ENCODE measurements at regions of chr6 and their contacts with region 1.

Region 1: DNA sequence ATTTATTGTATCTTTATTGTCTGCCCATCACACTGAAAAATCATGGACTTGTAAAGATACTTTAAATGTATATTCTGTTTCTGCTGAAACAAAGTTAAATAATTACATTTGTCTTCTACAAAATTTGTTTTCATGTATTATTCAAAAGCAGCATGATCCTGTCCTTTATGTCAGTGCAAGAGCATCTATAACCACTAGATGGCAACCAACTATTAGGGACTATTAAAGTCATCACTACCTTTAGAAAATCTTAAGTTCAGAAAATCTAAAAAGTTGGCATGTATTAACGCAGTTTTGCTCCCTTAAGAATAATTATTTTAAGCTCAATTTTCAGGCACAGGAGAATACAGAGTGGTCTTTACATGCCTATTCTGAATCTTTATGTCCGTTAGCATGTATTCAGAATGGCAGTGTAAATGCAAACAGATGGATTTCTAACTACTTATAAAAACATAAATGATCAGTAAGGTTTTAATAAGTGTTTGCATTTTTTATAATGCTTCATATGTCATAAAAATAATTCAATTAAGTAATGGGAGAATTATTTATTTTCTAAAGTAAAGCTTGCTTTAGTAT is 17.8 kb downstream of the TMEM30A start:
- DNase-seq: peak; percentile 42
- ATAC-seq: peak; percentile 77
- H3K4me3 ChIP-seq: no peak overlapping the region
- H3K27ac ChIP-seq: no peak overlapping the region
- H3K4me1 ChIP-seq: no peaks in the 10 kb centered on the region
- H3K27me3 ChIP-seq: no peaks in the 10 kb centered on the region
- CTCF ChIP-seq: peak; percentile 63
- EP300 ChIP-seq: no peak
- POLR2A ChIP-seq: no peak
- RAD21 ChIP-seq: peak; percentile 26; the same call in 1 of the 2 replicates

Region 2: DNA sequence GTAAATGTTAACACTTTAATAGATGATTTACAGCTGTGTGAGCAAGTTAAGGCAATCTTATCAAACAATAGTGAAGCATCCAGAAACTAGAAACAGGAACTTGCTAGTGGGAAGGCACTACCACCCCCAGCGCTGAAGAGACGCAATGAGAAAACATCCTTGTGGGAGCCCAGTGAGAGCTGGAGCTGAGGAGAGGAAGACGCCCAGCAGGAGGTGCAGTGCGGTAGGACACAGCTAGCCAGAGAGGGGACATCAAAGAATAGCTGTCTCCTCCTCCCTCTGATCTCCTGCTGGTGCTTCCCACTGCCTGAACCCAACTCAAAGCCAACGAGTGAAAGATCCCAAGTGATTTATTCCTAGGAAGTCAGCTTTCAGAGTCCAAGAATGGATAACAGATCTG is 201.3 kb before region 1 on chr6:
- CTCF ChIA-PET with region 1: no interaction called
- POLR2A ChIA-PET with region 1: no interaction called
- in situ Hi-C with region 1: no loop called
- intact Hi-C with region 1: no loop called
- DNase-seq: no peak
- ATAC-seq: peak; percentile 80
- H3K4me3 ChIP-seq: no peak overlapping the region
- H3K27ac ChIP-seq: no peak overlapping the region
- H3K4me1 ChIP-seq: no peaks in the 10 kb centered on the region
- H3K27me3 ChIP-seq: no peaks in the 10 kb centered on the region
- CTCF ChIP-seq: 0 out of 2 replicates have a peak, but pooled peaks have one; percentile 29
- EP300 ChIP-seq: no peak
- POLR2A ChIP-seq: no peak
- RAD21 ChIP-seq: no peak

Region 3: GRCh38 chr6:75296811-75297779 is 30.3 kb after region 1 on chr6:
- CTCF ChIA-PET with region 1: interaction called, 9 read pairs
- POLR2A ChIA-PET with region 1: no interaction called
- in situ Hi-C with region 1: no loop called
- intact Hi-C with region 1: loop called (anchors 2 kb)
- DNase-seq: peak; percentile 57
- ATAC-seq: peak; percentile 56
- H3K4me3 ChIP-seq: no peak overlapping the region
- H3K27ac ChIP-seq: no peak overlapping the region
- H3K4me1 ChIP-seq: no peaks in the 10 kb centered on the region
- H3K27me3 ChIP-seq: no peaks in the 10 kb centered on the region
- CTCF ChIP-seq: peak; percentile 72
- EP300 ChIP-seq: no peak
- POLR2A ChIP-seq: no peak
- RAD21 ChIP-seq: peak; percentile 28; the same call in 1 of the 2 replicates

Region 4: GRCh38 chr6:75317503-75318206 is 50.9 kb after region 1 on chr6:
- CTCF ChIA-PET with region 1: no interaction called
- POLR2A ChIA-PET with region 1: no interaction called
- in situ Hi-C with region 1: no loop called
- intact Hi-C with region 1: no loop called
- DNase-seq: no peak
- ATAC-seq: no peak
- H3K4me3 ChIP-seq: no peak overlapping the region
- H3K27ac ChIP-seq: no peak overlapping the region
- H3K4me1 ChIP-seq: no peaks in the 10 kb centered on the region
- H3K27me3 ChIP-seq: peaks cover 0 to 20% of the 10 kb centered on the region in 2 experiments; a peak in 2 of 5 replicates
- CTCF ChIP-seq: no peak
- EP300 ChIP-seq: no peak
- POLR2A ChIP-seq: no peak
- RAD21 ChIP-seq: no peak

Region 5: DNA sequence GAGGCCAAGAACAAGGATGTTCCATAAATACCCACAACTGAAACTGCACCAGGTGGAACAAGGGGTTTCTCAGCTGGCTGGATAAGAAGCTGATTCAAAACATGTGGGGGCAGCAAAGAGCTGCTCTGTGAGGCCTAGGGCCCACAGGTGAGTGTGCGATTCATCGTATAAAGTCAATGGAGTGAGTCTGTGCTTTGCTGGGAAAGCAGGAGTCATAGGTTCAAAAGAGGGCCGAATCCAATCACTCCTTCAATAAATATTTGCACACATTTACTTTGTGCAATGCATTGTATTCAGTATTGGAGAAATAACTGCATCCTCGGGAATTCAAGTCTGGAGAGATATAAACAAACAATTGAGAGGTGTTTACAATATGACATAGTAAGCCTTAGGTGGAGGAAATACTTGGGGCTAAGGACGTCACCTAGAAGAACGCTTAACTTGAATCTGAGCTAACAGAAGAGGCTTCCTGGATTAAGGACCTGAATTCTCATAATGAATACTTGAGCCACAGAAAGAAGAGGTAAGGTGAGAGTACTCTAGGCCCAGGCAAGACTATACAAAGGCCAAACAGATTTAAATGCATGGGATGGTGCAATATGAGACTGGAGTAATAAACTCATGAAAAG is 101.5 kb after region 1 on chr6:
- CTCF ChIA-PET with region 1: no interaction called
- POLR2A ChIA-PET with region 1: no interaction called
- in situ Hi-C with region 1: no loop called
- intact Hi-C with region 1: loop called (anchors 5 kb)
- DNase-seq: peak; percentile 44
- ATAC-seq: peak; percentile 98
- H3K4me3 ChIP-seq: no peak overlapping the region
- H3K27ac ChIP-seq: no peak overlapping the region
- H3K4me1 ChIP-seq: no peaks in the 10 kb centered on the region
- H3K27me3 ChIP-seq: no peaks in the 10 kb centered on the region
- CTCF ChIP-seq: peak; percentile 76
- EP300 ChIP-seq: no peak
- POLR2A ChIP-seq: no peak
- RAD21 ChIP-seq: peak; percentile 67